ENCODE measurements at regions of chr18 and their contacts with region 1.

Region 1: GRCh38 chr18:3593904-3594661 is 144.1 kb downstream of the TGIF1 start:
- DNase-seq: peak; percentile 91
- ATAC-seq: peak; percentile 81
- H3K4me3 Mint-ChIP-seq: peak overlapping the region; percentile 62
- H3K27ac Mint-ChIP-seq: peak overlapping the region; percentile 95
- H3K4me1 Mint-ChIP-seq: peaks cover 81% of the 10 kb centered on the region
- H3K27me3 Mint-ChIP-seq: peaks cover 28% of the 10 kb centered on the region
- CTCF ChIP-seq: peak; percentile 69; the same call in 1 of the 2 replicates

Region 2: DNA sequence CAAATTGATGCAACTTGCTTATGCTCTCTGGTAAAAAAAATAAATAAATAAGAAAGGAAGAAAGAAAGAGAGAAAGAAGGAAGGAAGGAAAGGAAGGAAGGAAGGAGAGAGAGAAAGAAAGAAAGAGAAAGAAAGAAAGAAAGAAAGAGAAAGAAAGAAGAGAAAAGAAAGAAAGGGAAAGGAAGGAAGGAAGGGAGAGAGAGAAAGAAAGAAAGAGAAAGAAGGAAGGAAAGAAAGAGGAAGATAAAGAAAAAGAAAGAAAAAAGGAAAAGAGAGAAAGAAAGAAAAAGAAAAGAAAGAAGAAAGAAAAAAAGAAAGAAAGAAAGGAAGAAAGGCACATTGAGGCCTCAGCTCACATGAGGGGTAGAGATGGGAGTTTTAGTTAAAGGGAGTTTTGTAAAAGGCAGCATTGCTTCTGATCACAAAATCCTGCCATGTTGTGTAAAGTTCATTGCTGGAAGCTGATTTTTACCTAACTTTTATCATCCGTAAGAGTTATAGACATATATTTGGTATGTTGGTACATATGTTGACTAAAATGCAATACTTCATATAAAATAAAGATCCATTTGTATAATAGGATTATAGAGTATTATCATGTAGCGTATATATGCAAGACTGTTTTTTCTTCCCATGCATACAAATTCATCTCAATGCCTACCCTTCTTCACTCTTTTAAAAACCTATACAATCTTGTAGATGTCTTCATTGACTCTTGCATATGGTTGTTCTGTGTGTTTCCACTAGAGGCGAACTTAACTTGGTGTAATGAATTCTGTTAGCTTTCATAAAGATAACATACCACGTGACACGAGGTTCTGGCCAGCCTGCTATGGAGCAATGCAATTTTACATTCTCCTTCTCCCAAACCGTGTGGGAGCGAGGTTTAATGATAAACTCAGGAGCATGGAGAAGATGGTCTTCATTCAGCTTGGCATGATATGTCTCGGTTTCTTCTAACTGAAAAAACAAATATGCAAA is 407.1 kb before region 1 on chr18:
- CTCF ChIA-PET with region 1: no interaction called
- POLR2A ChIA-PET with region 1: no interaction called
- DNase-seq: no peak
- ATAC-seq: no peak
- H3K4me3 Mint-ChIP-seq: no peak overlapping the region
- H3K27ac Mint-ChIP-seq: no peak overlapping the region
- H3K4me1 Mint-ChIP-seq: no peaks in the 10 kb centered on the region
- H3K27me3 Mint-ChIP-seq: no peaks in the 10 kb centered on the region
- CTCF ChIP-seq: no peak

Region 3: DNA sequence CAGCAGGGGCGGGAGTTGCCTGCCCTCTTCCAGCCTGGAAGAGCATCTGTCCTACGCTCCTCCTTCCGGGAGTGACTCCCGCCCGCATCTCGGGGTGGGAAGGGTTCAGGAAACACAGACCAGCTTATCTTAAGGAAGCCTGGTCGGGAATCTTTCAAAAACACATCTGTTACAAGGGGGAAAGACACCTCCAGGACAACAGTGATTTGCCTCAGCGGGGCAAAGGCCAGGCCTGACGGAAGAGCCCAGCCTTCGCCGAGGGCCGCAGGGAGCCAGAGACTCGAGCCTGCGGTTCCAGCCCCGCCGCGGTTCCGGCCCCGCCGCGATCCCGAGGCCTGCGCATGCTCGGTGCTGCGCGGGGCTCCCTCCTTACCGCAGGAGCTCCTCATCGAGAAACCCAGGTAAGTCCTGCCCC is 182.2 kb before region 1 on chr18:
- CTCF ChIA-PET with region 1: no interaction called
- POLR2A ChIA-PET with region 1: no interaction called
- DNase-seq: peak; percentile 38
- ATAC-seq: peak; percentile 78
- H3K4me3 Mint-ChIP-seq: peak overlapping the region; percentile 10; the same call in 1 of the 2 replicates
- H3K27ac Mint-ChIP-seq: no peak overlapping the region
- H3K4me1 Mint-ChIP-seq: peaks cover 13% of the 10 kb centered on the region
- H3K27me3 Mint-ChIP-seq: no peaks in the 10 kb centered on the region; the same call in 1 of the 2 replicates
- CTCF ChIP-seq: no peak

Region 4: GRCh38 chr18:3447895-3448837 is 145.9 kb before region 1 on chr18:
- CTCF ChIA-PET with region 1: interaction called, 53 read pairs
- POLR2A ChIA-PET with region 1: interaction called, 9 read pairs
- DNase-seq: peak; percentile 97
- ATAC-seq: peak; percentile 87
- H3K4me3 Mint-ChIP-seq: peak overlapping the region; percentile 83
- H3K27ac Mint-ChIP-seq: peak overlapping the region; percentile 100
- H3K4me1 Mint-ChIP-seq: peaks cover 42% of the 10 kb centered on the region
- H3K27me3 Mint-ChIP-seq: no peaks in the 10 kb centered on the region
- CTCF ChIP-seq: no peak

Region 5: GRCh38 chr18:3466045-3466444 is 128.0 kb before region 1 on chr18:
- CTCF ChIA-PET with region 1: interaction called, 34 read pairs
- POLR2A ChIA-PET with region 1: interaction called, 4 read pairs
- DNase-seq: no peak
- ATAC-seq: no peak
- H3K4me3 Mint-ChIP-seq: no peak overlapping the region
- H3K27ac Mint-ChIP-seq: peak overlapping the region; percentile 97
- H3K4me1 Mint-ChIP-seq: peaks cover 52% of the 10 kb centered on the region
- H3K27me3 Mint-ChIP-seq: no peaks in the 10 kb centered on the region
- CTCF ChIP-seq: no peak

Region 6: GRCh38 chr18:3493501-3494244 is 100.4 kb before region 1 on chr18:
- CTCF ChIA-PET with region 1: interaction called, 16 read pairs
- POLR2A ChIA-PET with region 1: interaction called, 3 read pairs
- DNase-seq: no peak
- ATAC-seq: peak; percentile 28; the same call in 1 of the 2 replicates
- H3K4me3 Mint-ChIP-seq: no peak overlapping the region
- H3K27ac Mint-ChIP-seq: peak overlapping the region; percentile 50
- H3K4me1 Mint-ChIP-seq: peaks cover 47% of the 10 kb centered on the region
- H3K27me3 Mint-ChIP-seq: peaks cover 8% of the 10 kb centered on the region
- CTCF ChIP-seq: no peak

Region 7: DNA sequence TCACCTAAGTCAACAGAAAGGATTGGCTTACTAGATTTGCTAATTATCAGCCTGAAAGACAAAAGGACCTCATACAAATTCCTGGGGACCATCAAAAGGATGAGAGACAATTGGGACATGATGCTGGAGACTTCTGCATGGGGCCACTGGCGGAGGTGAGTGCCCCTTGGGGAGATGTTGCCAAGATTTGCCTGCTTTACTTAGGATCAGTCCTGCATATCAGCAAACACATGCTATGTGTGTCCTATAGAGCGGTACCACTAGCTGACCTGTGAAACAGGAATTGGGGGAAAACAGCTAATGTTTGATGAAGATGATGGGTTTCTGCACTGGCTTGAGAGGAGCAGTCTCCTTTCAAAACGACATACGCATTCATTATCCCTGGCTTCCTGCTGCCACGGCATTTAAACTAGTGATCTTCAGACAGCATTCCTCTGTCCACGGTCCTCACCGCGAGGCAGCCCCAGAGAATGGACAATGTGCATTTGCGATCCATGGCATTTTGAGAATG is 39.9 kb before region 1 on chr18:
- CTCF ChIA-PET with region 1: interaction called, 11 read pairs
- POLR2A ChIA-PET with region 1: no interaction called
- DNase-seq: peak; percentile 55
- ATAC-seq: peak; percentile 82
- H3K4me3 Mint-ChIP-seq: peak overlapping the region; percentile 45
- H3K27ac Mint-ChIP-seq: peak overlapping the region; percentile 96
- H3K4me1 Mint-ChIP-seq: peaks cover 50% of the 10 kb centered on the region
- H3K27me3 Mint-ChIP-seq: peaks cover 5% of the 10 kb centered on the region; the same call in 1 of the 2 replicates
- CTCF ChIP-seq: no peak

Region 8: DNA sequence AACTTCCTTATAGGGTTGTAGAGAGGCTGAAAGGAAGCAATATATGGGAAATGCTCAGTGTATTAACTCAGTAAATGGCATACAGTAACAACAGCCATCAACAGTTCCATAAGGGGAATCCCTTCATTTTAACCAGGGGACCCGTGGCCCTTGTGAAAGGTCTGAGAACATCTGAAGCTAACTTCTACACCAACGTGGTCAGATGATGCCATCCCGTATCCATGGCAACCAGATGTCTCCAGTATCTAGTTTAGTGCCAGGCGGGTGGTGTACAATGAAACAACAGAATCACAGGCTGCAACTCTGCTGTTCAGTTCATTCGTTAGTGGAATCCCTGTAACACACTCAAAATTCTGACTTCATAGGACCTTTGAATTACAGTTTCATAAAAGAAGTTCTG is 18.2 kb after region 1 on chr18:
- CTCF ChIA-PET with region 1: interaction called, 15 read pairs
- POLR2A ChIA-PET with region 1: interaction called, 4 read pairs
- DNase-seq: no peak
- ATAC-seq: no peak
- H3K4me3 Mint-ChIP-seq: no peak overlapping the region
- H3K27ac Mint-ChIP-seq: no peak overlapping the region
- H3K4me1 Mint-ChIP-seq: peaks cover 61% of the 10 kb centered on the region
- H3K27me3 Mint-ChIP-seq: no peaks in the 10 kb centered on the region
- CTCF ChIP-seq: no peak

Region 9: GRCh38 chr18:3703732-3704176 is 109.7 kb after region 1 on chr18:
- CTCF ChIA-PET with region 1: no interaction called
- POLR2A ChIA-PET with region 1: no interaction called
- DNase-seq: peak; percentile 65
- ATAC-seq: peak; percentile 83
- H3K4me3 Mint-ChIP-seq: no peak overlapping the region
- H3K27ac Mint-ChIP-seq: peak overlapping the region; percentile 39; the same call in 1 of the 2 replicates
- H3K4me1 Mint-ChIP-seq: peaks cover 8% of the 10 kb centered on the region
- H3K27me3 Mint-ChIP-seq: no peaks in the 10 kb centered on the region; the same call in 1 of the 2 replicates
- CTCF ChIP-seq: peak; percentile 50

Region 10: DNA sequence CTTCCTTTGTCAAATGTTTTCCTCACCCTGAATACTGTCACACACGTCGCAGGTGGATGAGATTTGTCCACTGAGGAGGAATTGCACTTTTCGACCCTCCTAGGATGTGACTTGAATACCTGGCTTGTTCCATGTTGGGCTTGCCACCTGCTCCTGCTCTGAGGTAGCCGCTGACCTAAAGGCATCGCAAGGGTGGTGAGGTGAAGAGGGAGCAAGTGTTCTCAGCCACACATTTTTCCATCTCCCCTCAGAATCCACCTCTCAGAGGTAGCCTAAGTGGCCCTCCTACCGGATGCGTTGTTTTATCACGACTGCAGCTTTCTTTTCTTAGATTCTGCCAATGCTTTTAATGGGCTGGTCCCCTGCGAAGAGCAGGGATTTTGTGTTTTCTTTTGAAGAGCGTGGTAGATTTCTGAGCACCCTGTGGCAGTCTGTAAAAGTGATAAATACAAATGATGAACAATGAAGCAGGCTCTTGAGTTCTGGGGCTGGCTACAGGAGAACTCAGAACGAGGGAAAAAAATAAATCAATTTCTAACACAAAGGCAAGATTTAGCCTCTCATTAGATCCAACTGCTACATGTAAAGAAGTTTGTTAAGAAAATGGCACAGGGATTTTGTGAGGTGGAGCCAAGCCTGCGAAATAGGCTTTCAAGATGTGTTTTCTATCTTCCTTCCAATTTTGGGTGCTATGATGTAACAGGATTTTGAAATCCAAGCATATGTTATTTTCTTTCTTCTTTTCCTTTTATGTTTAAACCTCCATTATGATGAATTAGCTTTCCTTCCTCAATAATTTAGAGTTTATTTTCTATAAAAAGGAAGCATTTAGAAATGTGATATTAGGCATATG is 242.6 kb after region 1 on chr18:
- CTCF ChIA-PET with region 1: no interaction called
- POLR2A ChIA-PET with region 1: no interaction called
- DNase-seq: no peak
- ATAC-seq: peak; percentile 57; the same call in 1 of the 2 replicates
- H3K4me3 Mint-ChIP-seq: no peak overlapping the region
- H3K27ac Mint-ChIP-seq: peak overlapping the region; percentile 68; the same call in 1 of the 2 replicates
- H3K4me1 Mint-ChIP-seq: peaks cover 37% of the 10 kb centered on the region
- H3K27me3 Mint-ChIP-seq: no peaks in the 10 kb centered on the region
- CTCF ChIP-seq: no peak

Measured in WTC11 (cell line).